GM12878 (cell line): ENCODE measurements at regions of chr1 and their contacts with region 1.

Region 1: GRCh38 chr1:151156515-151156819 is at the start of gene TNFAIP8L2:
- DNase-seq: peak; percentile 32
- ATAC-seq: peak; percentile 96
- H3K4me3 ChIP-seq: peak within 1 kb of the TSS; percentile 85
- H3K27ac ChIP-seq: peak within 1 kb of the TSS; percentile 81
- H3K4me1 ChIP-seq: peaks cover 30% of the 10 kb centered on the region
- H3K27me3 ChIP-seq: no peaks in the 10 kb centered on the region
- CTCF ChIP-seq: no peak
- EP300 ChIP-seq: no peak
- POLR2A ChIP-seq: peak; percentile 30; the same call in 1 of the 2 replicates
- RAD21 ChIP-seq: no peak
- polyA plus RNA-seq, gene TNFAIP8L2: 23.9 to 26.3 TPM

Region 2: DNA sequence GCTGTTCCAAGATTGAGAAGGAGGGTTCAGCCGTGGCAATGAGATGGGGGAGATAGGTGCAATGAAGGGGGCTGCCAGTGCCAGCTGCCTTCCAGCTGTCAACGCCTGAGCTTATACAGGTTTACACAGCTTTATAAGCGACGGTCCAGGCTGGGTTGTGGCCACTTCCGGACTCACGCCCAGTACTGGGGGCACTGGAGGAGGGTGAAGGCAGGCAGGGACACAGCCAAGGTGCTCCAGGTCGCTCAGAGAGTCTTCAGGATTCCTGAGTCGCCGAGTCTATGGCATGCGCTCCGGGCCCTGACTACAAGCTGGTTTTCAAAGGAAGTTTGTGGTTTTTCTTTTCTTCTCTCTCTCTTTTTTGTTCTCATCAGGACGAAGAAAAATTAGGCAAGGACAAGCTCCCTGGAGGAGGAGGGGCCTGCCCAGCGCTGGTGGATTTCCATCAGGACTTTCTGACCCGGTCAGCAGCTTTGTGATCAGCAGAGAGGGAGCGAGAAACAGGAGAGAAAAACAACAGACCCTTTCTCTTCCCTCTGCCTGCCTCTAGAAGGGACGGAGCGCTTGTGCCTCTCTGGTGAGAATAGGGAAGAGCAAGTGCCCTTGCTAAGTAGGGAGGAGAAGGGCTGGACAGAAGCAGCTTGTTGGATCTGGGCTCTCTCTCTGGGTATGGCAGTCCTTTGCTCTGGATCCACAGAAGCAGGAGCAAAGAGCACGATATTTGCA is 150.0 kb before region 1 on chr1 and contains the start of gene MINDY1:
- CTCF ChIA-PET with region 1: interaction called, 18 read pairs
- POLR2A ChIA-PET with region 1: interaction called, 7 read pairs
- RAD21 ChIA-PET with region 1: interaction called, 11 read pairs
- SMC1A ChIA-PET with region 1: interaction called, 7 read pairs
- in situ Hi-C with region 1: no loop called
- intact Hi-C with region 1: no loop called
- DNase-seq: peak; percentile 32
- ATAC-seq: peak; percentile 71
- H3K4me3 ChIP-seq: peak within 1 kb of the TSS; percentile 73
- H3K27ac ChIP-seq: peak within 1 kb of the TSS; percentile 73
- H3K4me1 ChIP-seq: peaks cover 12% of the 10 kb centered on the region
- H3K27me3 ChIP-seq: no peaks in the 10 kb centered on the region
- CTCF ChIP-seq: peak; percentile 38 to 57 (median 43); a peak in 4 of 6 replicates
- EP300 ChIP-seq: no peak
- POLR2A ChIP-seq: peak; percentile 60
- RAD21 ChIP-seq: peak; percentile 39; the same call in 1 of the 2 replicates
- polyA plus RNA-seq, gene MINDY1: 0.48 to 0.49 TPM

Region 3: GRCh38 chr1:151059078-151059907 is 97.2 kb before region 1 on chr1 and contains the start of gene CDC42SE1:
- CTCF ChIA-PET with region 1: interaction called, 12 read pairs
- POLR2A ChIA-PET with region 1: interaction called, 5 read pairs
- RAD21 ChIA-PET with region 1: interaction called, 8 read pairs
- SMC1A ChIA-PET with region 1: interaction called, 9 read pairs
- in situ Hi-C with region 1: no loop called
- intact Hi-C with region 1: no loop called
- DNase-seq: peak; percentile 55
- ATAC-seq: peak; percentile 86
- H3K4me3 ChIP-seq: peak within 1 kb of the TSS; percentile 93
- H3K27ac ChIP-seq: peak within 1 kb of the TSS; percentile 97
- H3K4me1 ChIP-seq: peaks cover 28% of the 10 kb centered on the region
- H3K27me3 ChIP-seq: no peaks in the 10 kb centered on the region
- CTCF ChIP-seq: peak; percentile 75 to 90 (median 84)
- EP300 ChIP-seq: no peak
- POLR2A ChIP-seq: peak; percentile 98
- RAD21 ChIP-seq: 0 out of 2 replicates have a peak, but pooled peaks have one; percentile 1
- polyA plus RNA-seq, gene CDC42SE1: 36.9 to 38.0 TPM

Region 4: DNA sequence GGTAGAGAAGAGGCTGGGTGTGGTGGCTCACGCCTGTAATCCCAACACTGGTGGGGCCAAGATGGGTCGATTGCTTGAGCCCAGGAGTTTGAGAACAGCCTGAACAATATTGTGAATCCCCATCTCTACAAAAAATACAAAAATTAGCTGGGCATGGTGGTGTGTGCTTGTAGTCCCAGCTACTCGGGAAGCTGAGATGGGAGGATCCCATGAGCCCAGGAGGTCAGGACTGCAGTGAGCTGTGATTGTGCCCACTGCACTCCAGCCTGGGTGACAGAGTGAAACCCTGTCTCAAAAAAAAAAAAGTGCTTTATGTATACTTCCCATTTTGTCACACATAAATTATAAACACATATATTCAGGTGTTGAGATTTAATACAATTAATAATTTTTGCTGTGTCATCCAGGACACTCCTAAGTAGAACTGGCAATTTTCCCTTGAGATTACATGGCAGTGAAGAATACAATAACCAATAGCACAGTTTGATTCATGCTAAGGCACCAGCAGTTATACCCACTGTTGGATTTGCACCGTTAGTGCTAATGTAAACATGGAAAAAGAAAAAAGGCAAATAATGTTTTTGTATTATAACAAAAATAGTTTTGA is 70.4 kb before region 1 on chr1:
- CTCF ChIA-PET with region 1: interaction called, 10 read pairs
- POLR2A ChIA-PET with region 1: no interaction called
- RAD21 ChIA-PET with region 1: no interaction called
- SMC1A ChIA-PET with region 1: no interaction called
- in situ Hi-C with region 1: no loop called
- intact Hi-C with region 1: no loop called
- DNase-seq: no peak
- ATAC-seq: no peak
- H3K4me3 ChIP-seq: no peak overlapping the region
- H3K27ac ChIP-seq: no peak overlapping the region
- H3K4me1 ChIP-seq: no peaks in the 10 kb centered on the region
- H3K27me3 ChIP-seq: no peaks in the 10 kb centered on the region
- CTCF ChIP-seq: no peak
- EP300 ChIP-seq: no peak
- POLR2A ChIP-seq: no peak
- RAD21 ChIP-seq: no peak

Region 5: GRCh38 chr1:151189638-151190445 is 33.4 kb after region 1 on chr1 and contains the start of gene VPS72:
- CTCF ChIA-PET with region 1: interaction called, 10 read pairs
- POLR2A ChIA-PET with region 1: interaction called, 6 read pairs
- RAD21 ChIA-PET with region 1: interaction called, 20 read pairs
- SMC1A ChIA-PET with region 1: interaction called, 5 read pairs
- in situ Hi-C with region 1: no loop called
- intact Hi-C with region 1: no loop called
- DNase-seq: peak; percentile 72
- ATAC-seq: peak; percentile 92
- H3K4me3 ChIP-seq: peak within 1 kb of the TSS; percentile 76
- H3K27ac ChIP-seq: peak within 1 kb of the TSS; percentile 87
- H3K4me1 ChIP-seq: peaks cover 4% of the 10 kb centered on the region; the same call in 1 of the 2 replicates
- H3K27me3 ChIP-seq: no peaks in the 10 kb centered on the region
- CTCF ChIP-seq: no peak
- EP300 ChIP-seq: no peak; a peak in 1 of 4 replicates
- POLR2A ChIP-seq: peak; percentile 92
- RAD21 ChIP-seq: no peak
- polyA plus RNA-seq, gene VPS72: 6.7 to 9.0 TPM

Region 6: DNA sequence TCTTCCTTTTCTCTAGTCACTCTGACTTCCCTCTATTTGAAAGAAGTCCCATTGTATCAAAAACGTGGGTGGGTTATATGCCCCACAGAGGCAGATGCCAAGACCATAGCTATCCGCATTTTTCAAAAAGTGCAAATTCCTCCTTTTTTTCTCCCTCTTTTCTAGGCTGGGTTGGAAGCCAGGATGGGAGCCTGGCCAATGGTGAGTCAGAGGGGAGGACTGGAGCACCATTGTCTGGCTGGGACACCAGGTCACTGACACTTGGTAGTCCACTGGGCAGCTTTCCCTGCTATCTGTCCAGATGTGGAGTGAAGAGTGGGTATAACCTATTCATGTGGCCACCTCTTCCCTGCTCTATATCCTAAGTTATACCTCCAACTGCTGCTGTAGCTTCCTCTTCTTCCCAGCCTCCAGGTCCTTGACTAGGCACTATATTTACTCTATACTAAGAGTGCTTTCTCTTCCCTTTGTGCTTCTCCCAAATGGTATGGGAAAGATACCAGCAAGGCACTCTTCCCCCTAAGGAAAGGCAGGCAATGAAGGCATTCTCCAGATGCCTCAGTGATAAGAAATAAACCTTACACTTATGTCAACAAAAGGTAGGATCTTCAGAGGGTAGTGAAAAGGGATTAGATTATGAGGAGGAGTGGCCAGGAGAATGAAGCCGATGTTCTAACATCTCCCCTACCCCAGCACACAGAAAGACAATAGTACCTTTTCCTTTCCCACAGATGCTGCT is 157.8 kb after region 1 on chr1:
- CTCF ChIA-PET with region 1: no interaction called
- POLR2A ChIA-PET with region 1: no interaction called
- RAD21 ChIA-PET with region 1: no interaction called
- SMC1A ChIA-PET with region 1: no interaction called
- in situ Hi-C with region 1: no loop called
- intact Hi-C with region 1: no loop called
- DNase-seq: no peak
- ATAC-seq: no peak
- H3K4me3 ChIP-seq: no peak overlapping the region
- H3K27ac ChIP-seq: no peak overlapping the region
- H3K4me1 ChIP-seq: no peaks in the 10 kb centered on the region
- H3K27me3 ChIP-seq: no peaks in the 10 kb centered on the region
- CTCF ChIP-seq: no peak
- EP300 ChIP-seq: no peak
- POLR2A ChIP-seq: no peak
- RAD21 ChIP-seq: no peak

Region 7: DNA sequence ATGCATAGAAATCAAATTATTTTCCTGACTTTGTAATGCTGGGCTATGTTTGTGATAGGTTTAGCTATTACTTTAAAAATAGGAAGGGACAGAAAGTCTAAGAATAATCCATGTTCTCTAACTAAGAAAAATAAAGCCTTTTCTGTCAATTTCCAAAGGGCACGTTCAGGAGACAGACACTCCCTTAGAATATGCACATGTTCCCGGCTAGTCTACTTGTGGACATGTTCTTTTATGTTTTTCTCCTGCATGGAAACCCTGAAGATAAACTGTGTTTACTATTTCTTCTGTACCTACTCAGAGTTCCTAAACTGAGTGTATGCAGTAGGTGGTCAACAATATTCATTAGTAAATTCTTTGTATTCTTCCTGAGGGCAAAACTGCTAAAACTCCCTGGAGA is 255.4 kb after region 1 on chr1:
- CTCF ChIA-PET with region 1: no interaction called
- POLR2A ChIA-PET with region 1: no interaction called
- RAD21 ChIA-PET with region 1: no interaction called
- SMC1A ChIA-PET with region 1: no interaction called
- in situ Hi-C with region 1: no loop called
- intact Hi-C with region 1: no loop called
- DNase-seq: no peak
- ATAC-seq: no peak
- H3K4me3 ChIP-seq: no peak overlapping the region
- H3K27ac ChIP-seq: no peak overlapping the region
- H3K4me1 ChIP-seq: no peaks in the 10 kb centered on the region
- H3K27me3 ChIP-seq: no peaks in the 10 kb centered on the region
- CTCF ChIP-seq: no peak
- EP300 ChIP-seq: no peak
- POLR2A ChIP-seq: no peak
- RAD21 ChIP-seq: no peak